ENCODE measurements at regions of chr12 and their contacts with region 1.

Region 1: GRCh38 chr12:104381731-104382480 is 74.8 kb upstream of the CHST11 start:
- DNase-seq: peak; percentile 91
- ATAC-seq: peak; percentile 84
- H3K4me3 Mint-ChIP-seq: no peak overlapping the region
- H3K27ac Mint-ChIP-seq: no peak overlapping the region
- H3K4me1 Mint-ChIP-seq: peaks cover 10% of the 10 kb centered on the region
- H3K27me3 Mint-ChIP-seq: peaks cover 5% of the 10 kb centered on the region
- CTCF ChIP-seq: peak; percentile 86

Region 2: DNA sequence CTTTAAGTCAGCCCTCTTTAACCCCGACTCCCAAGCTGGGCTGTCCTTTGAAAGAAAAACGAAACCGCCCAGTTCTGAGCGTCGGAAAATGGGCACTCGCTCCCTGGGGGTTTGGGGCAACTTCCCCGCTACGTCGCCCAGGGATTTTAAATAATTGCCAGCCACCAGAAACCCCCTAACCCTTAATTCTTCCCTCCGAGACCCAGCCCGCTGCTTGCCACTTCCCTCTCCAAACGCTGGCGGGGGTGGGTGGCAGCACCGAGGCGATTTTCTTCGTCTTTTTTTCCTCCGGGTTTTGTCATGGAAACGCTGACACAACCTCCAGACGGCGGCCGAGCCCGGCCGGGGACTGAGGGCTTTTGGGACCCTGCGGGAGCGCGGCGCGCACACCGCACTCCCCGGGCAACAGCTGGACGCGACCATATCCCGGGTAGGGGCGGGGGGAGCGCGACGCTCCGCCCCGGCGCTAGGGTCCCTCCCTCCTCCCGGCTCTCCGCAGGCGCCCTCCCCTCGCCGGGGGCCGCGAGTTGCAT is 74.6 kb after region 1 on chr12 and contains the start of gene CHST11:
- CTCF ChIA-PET with region 1: interaction called, 40 read pairs
- POLR2A ChIA-PET with region 1: no interaction called
- intact Hi-C with region 1: loop called (anchors 5 kb)
- DNase-seq: peak; percentile 89
- ATAC-seq: peak; percentile 83
- H3K4me3 Mint-ChIP-seq: peak within 1 kb of the TSS; percentile 83
- H3K27ac Mint-ChIP-seq: peak within 1 kb of the TSS; percentile 97
- H3K4me1 Mint-ChIP-seq: peaks cover 40% of the 10 kb centered on the region
- H3K27me3 Mint-ChIP-seq: no peaks in the 10 kb centered on the region
- CTCF ChIP-seq: peak; percentile 20
- total RNA-seq, gene CHST11: 30.9 to 33.9 TPM

Region 3: GRCh38 chr12:104579718-104580495 is 198.0 kb after region 1 on chr12:
- CTCF ChIA-PET with region 1: interaction called, 11 read pairs
- POLR2A ChIA-PET with region 1: no interaction called
- intact Hi-C with region 1: no loop called
- DNase-seq: no peak
- ATAC-seq: no peak
- H3K4me3 Mint-ChIP-seq: no peak overlapping the region
- H3K27ac Mint-ChIP-seq: no peak overlapping the region
- H3K4me1 Mint-ChIP-seq: peaks cover 76% of the 10 kb centered on the region
- H3K27me3 Mint-ChIP-seq: no peaks in the 10 kb centered on the region
- CTCF ChIP-seq: no peak

Region 4: DNA sequence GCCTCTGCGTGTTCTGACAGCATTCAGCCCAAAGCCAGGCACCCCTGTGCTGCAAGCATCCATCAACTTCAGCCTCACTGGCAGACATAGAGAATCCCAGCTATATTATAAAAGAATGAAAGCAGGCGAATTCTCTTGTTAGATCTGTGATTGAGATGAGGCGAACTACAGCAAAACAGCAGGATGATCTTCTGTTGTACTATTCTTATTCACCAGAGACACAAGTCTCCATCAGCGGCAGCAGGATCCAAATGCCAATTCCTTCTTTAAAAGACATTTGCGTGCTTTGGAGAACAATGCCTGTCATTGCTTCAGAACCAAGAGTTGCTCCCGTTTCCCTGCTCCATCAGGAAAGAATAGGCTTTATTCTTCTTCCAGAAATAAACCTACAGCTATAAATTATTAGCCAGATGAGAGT is 387.2 kb after region 1 on chr12:
- CTCF ChIA-PET with region 1: interaction called, 15 read pairs
- POLR2A ChIA-PET with region 1: no interaction called
- intact Hi-C with region 1: no loop called
- DNase-seq: no peak
- ATAC-seq: no peak
- H3K4me3 Mint-ChIP-seq: no peak overlapping the region
- H3K27ac Mint-ChIP-seq: no peak overlapping the region
- H3K4me1 Mint-ChIP-seq: peaks cover 13% of the 10 kb centered on the region
- H3K27me3 Mint-ChIP-seq: no peaks in the 10 kb centered on the region
- CTCF ChIP-seq: no peak

Region 5: GRCh38 chr12:104877123-104877705 is 495.3 kb after region 1 on chr12:
- CTCF ChIA-PET with region 1: interaction called, 8 read pairs
- POLR2A ChIA-PET with region 1: no interaction called
- intact Hi-C with region 1: loop called (anchors 5 kb)
- DNase-seq: peak; percentile 53
- ATAC-seq: peak; percentile 42
- H3K4me3 Mint-ChIP-seq: no peak overlapping the region
- H3K27ac Mint-ChIP-seq: no peak overlapping the region
- H3K4me1 Mint-ChIP-seq: peaks cover 2% of the 10 kb centered on the region
- H3K27me3 Mint-ChIP-seq: no peaks in the 10 kb centered on the region
- CTCF ChIP-seq: peak; percentile 71